Activated naive CD4-positive, alpha-beta T cell treated with anti-CD3 and anti-CD28 coated beads for 36 hours (primary cell): ENCODE measurements at regions of chr4 and their contacts with region 1.

Region 1: DNA sequence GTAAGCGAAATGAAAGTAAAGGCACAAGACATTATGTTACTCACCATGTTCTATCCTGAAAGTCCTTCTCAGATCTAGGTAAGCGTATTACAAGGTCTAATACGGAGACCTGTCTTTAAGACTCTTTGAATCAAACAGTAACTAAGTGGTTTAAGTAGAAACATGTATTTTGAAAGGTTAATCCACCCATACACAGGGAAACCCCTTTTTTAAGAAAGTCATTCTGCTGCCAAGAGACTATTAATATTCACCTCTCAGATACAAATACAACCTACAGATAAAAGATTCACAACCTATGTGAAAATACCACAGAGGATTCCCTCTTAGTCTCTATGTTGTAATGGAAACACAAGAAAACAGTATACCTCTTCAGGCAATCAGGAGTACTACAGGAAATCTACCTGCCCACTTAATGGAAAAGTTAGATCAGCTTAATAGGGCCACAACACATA is 63.2 kb upstream of the TNIP3 start:
- DNase-seq: no peak
- H3K4me3 Mint-ChIP-seq: peak overlapping the region; percentile 61
- H3K27ac Mint-ChIP-seq: peak overlapping the region; percentile 77
- H3K4me1 Mint-ChIP-seq: peaks cover 56% of the 10 kb centered on the region
- H3K27me3 Mint-ChIP-seq: no peaks in the 10 kb centered on the region

Region 2: GRCh38 chr4:120703908-120704307 is 523.5 kb before region 1 on chr4:
- CTCF ChIA-PET with region 1: no interaction called
- intact Hi-C with region 1: no loop called
- DNase-seq: no peak
- H3K4me3 Mint-ChIP-seq: no peak overlapping the region
- H3K27ac Mint-ChIP-seq: no peak overlapping the region
- H3K4me1 Mint-ChIP-seq: no peaks in the 10 kb centered on the region
- H3K27me3 Mint-ChIP-seq: peaks cover 3% of the 10 kb centered on the region

Region 3: DNA sequence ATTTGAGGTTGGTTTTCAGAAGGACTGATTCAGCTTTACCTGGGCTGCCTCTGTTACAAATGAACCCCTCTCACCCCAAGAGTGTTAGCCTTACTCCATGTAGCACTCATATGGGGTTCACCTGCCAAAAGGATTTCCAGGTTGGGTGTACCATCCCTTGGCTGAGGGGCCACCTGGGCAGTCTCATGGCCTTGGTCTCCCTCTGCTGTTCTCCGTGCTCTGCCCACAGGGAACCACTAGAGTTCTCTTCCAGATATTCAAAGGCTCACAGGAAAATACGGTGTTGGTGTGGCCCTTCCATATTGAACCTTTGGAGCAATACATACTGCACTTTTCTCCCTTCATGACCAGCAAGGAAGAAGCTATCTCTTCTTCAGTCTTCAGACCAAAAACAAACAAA is 286.8 kb before region 1 on chr4:
- CTCF ChIA-PET with region 1: no interaction called
- intact Hi-C with region 1: no loop called
- DNase-seq: no peak
- H3K4me3 Mint-ChIP-seq: no peak overlapping the region
- H3K27ac Mint-ChIP-seq: no peak overlapping the region
- H3K4me1 Mint-ChIP-seq: no peaks in the 10 kb centered on the region
- H3K27me3 Mint-ChIP-seq: no peaks in the 10 kb centered on the region

Region 4: DNA sequence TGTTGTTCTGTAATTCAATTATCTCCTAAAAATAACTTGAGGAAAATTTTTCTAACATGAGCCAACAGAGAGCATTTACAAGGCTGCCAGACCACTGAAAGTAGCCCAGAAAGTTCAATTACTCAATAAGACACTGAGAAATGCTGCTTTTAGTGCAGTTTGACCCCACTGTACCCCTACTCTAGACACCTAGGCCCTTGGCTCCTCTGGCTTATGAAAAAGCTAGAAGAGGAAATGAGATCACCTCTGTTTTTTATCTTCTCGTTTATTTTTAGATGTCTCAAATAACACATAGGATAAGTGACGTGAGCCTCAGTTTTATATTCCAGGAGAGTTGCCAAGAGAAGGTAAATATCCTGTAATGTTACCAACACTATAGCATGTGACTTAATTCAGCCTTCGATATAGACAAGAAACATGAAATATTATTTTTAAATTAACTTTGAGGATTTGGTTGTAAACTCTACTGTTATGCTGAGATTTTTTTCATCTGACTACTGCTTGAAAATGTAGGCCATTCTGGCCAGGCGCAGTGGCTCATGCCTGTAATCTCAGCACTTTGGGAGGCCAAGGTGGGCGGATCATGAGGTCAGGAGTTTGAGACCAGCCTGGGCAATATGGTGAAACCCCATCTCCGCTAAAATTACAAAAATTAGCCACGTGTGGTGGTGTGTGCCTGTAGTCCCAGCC is 87.7 kb before region 1 on chr4:
- CTCF ChIA-PET with region 1: no interaction called
- intact Hi-C with region 1: loop called (anchors 1 kb)
- DNase-seq: peak; percentile 29
- H3K4me3 Mint-ChIP-seq: no peak overlapping the region
- H3K27ac Mint-ChIP-seq: peak overlapping the region; percentile 79
- H3K4me1 Mint-ChIP-seq: peaks cover 57% of the 10 kb centered on the region
- H3K27me3 Mint-ChIP-seq: no peaks in the 10 kb centered on the region

Region 5: DNA sequence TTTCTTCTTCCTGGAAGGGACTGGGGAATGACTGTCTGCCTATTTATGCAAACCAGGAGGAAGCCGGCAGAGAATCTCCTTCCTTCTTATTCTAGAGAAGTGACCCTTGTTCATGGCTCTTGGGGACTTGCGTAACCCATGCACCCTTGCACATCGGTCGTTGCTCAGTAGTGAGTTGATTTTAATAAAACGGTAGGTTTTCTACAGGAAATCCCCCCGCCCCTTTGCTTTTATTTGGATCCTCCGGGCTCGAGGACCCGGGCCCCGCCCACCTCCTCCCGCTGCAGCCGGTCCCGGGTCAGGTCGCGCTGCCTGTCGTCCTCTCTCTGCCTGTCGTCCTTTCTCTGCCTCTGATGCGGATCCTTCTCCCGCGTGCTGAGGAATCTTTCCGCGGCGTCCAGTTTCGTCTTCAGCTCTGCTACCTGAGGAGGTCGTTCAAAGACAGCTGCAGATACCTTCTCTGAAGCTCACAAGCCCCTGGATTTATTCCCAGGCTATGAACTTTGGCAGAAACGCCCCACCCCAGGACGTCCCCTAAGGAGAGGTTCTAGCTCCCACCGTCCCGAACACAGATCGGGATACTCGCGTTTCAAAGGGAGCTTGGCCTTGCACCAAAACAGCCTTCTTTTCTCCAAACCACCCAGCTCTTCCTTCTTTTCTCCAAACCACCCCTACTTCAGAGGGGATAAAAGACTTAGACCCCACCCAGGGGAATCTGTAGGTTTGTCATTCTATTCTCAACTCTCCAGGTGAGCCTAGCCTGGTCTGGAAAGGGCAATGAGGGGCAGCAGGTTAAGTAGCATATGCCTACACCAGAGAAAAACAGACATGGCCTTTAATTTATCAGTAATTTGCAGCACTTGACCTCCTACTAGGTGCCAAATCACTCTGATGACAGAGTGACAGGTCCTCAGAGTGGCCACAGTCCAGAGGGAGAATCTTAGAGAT is 70.3 kb before region 1 on chr4:
- CTCF ChIA-PET with region 1: no interaction called
- intact Hi-C with region 1: loop called (anchors 1 kb)
- DNase-seq: peak; percentile 42
- H3K4me3 Mint-ChIP-seq: peak overlapping the region; percentile 78
- H3K27ac Mint-ChIP-seq: no peak overlapping the region
- H3K4me1 Mint-ChIP-seq: peaks cover 43% of the 10 kb centered on the region
- H3K27me3 Mint-ChIP-seq: no peaks in the 10 kb centered on the region

Region 6: DNA sequence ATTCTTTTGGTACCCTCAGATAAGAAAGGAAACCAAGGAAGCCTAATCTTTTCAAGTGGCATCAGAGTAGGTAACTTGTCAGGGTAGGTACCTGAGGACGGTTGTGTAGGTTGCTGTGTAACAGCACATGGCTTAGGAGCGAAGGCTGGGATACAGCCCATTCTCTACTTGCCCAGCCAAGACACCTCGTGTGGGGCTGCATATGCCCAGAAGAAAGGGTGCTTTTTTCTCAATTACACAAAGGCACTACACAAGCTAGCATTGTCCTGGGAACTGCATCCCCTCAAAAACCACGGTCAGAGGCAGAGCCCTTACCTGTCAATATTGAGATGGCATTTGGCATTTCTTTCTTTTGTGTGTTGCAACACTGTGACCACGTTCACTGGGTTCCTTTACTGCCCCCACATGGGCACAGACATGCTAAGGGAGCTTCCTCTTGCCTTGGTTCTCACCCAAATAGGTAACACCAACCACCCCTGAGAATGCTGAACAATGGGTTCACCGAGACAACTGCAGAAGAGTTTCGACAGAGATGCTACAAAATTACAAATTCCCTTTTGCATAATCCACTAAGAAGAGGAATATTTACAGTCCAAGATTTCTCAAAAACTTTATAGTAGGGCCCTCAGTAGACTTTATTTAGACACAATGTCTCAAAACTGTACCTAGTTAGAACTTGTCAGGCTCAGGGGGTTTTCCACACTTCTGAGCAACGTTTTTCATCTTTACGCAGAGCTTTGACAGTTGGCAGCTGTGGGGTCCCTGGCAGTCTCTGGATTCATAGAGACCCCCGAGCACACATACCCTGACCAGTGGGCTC is 27.4 kb before region 1 on chr4:
- CTCF ChIA-PET with region 1: interaction called, 7 read pairs
- intact Hi-C with region 1: loop called (anchors 1 kb)
- DNase-seq: peak; percentile 69
- H3K4me3 Mint-ChIP-seq: no peak overlapping the region
- H3K27ac Mint-ChIP-seq: peak overlapping the region; percentile 62
- H3K4me1 Mint-ChIP-seq: peaks cover 24% of the 10 kb centered on the region
- H3K27me3 Mint-ChIP-seq: no peaks in the 10 kb centered on the region

Region 7: GRCh38 chr4:121278811-121279368 is 51.5 kb after region 1 on chr4:
- CTCF ChIA-PET with region 1: no interaction called
- intact Hi-C with region 1: loop called (anchors 1 kb)
- DNase-seq: peak; percentile 41
- H3K4me3 Mint-ChIP-seq: no peak overlapping the region
- H3K27ac Mint-ChIP-seq: peak overlapping the region; percentile 66
- H3K4me1 Mint-ChIP-seq: peaks cover 19% of the 10 kb centered on the region
- H3K27me3 Mint-ChIP-seq: peaks cover 5% of the 10 kb centered on the region

Region 8: DNA sequence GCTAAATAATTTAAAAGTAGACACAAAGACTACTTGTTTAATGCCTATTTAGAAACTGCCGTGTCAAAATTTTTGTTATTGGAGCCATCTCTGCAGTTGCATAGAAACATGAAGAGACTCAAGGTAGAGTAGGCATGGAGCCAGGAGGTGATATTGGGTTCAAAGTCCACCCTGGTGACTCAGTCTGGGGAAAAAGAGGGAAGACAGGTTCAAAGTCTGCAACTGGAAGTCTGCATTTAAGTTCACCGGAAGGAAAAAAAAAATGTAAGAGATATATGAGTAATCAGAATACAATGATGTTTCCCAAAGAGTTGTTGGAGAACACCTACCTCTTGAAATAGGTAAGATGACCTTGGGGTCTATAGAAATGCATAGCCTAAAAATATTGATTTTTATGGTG is 220.9 kb after region 1 on chr4:
- CTCF ChIA-PET with region 1: no interaction called
- intact Hi-C with region 1: no loop called
- DNase-seq: no peak
- H3K4me3 Mint-ChIP-seq: no peak overlapping the region
- H3K27ac Mint-ChIP-seq: no peak overlapping the region
- H3K4me1 Mint-ChIP-seq: no peaks in the 10 kb centered on the region
- H3K27me3 Mint-ChIP-seq: peaks cover 3% of the 10 kb centered on the region